Activated T-helper 1 cell treated with anti-CD3 and anti-CD28 coated beads, Interleukin-12 subunit alpha, Interleukin-12 subunit beta, Interleukin-2, Interleukin-4 antibody, amounts not matched to agents 30 ng/mL and 10 ng/mL and 1 ng/mL, durations not matched to agents 14 hours and 24 hours and 36 hours (primary cell): ENCODE measurements at regions of chr9 and their contacts with region 1.

Region 1: DNA sequence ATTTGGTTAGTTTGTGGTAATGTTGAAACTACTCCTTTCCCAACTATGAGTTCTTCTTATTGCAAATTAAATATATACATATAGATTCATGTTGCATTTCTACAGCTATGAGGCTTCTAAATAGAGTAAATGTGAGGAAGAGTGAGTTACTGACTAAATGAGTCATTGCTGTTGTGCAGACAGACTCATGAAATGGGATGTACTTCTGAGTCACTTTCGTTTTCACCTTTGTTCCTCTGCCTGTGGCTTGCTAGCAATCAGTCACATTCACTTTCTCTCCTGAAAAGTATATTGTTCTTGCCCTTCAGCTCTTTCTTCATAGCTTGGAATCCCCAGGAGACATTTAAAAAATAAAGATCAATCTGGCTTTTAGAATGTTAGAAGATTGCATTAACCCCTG is 295.5 kb upstream of the SMC2 start:
- DNase-seq: no peak
- H3K4me3 Mint-ChIP-seq: no peak overlapping the region
- H3K27ac Mint-ChIP-seq: no peak overlapping the region
- H3K4me1 Mint-ChIP-seq: peaks cover 6% of the 10 kb centered on the region
- H3K27me3 Mint-ChIP-seq: no peaks in the 10 kb centered on the region

Region 2: GRCh38 chr9:103721056-103721455 is 77.6 kb before region 1 on chr9:
- intact Hi-C with region 1: no loop called
- DNase-seq: no peak
- H3K4me3 Mint-ChIP-seq: no peak overlapping the region
- H3K27ac Mint-ChIP-seq: no peak overlapping the region
- H3K4me1 Mint-ChIP-seq: no peaks in the 10 kb centered on the region
- H3K27me3 Mint-ChIP-seq: no peaks in the 10 kb centered on the region

Region 3: GRCh38 chr9:103991698-103992097 is 193.1 kb after region 1 on chr9:
- intact Hi-C with region 1: loop called (anchors 1 kb)
- DNase-seq: peak; percentile 22
- H3K4me3 Mint-ChIP-seq: peak overlapping the region; percentile 45
- H3K27ac Mint-ChIP-seq: peak overlapping the region; percentile 71
- H3K4me1 Mint-ChIP-seq: peaks cover 30% of the 10 kb centered on the region
- H3K27me3 Mint-ChIP-seq: no peaks in the 10 kb centered on the region